MCF 10A (cell line): ENCODE measurements at regions of chrX and their contacts with region 1.

Region 1: DNA sequence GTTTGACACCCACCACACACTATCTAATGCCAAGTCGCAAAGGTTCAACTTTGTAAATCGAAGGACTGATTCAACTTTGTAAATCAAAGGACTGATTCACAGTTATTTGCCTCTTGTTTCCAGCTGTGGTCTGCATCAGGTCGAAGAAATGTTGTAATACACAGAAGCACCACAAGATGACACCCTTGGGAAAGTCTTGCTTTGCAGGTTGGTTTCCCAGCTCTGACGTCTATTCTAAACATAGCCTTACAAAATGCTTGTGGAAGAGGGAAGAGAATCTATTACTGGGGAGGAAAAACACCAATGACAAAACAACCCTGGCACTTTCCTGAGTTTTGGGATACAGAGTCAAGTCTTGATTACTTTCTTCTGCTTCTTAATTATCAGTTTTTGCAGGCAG is 35.3 kb downstream of the SUPT20HL1 start:
- DNase-seq: peak; percentile 79
- H3K4me3 Mint-ChIP-seq: no peak overlapping the region
- H3K27ac Mint-ChIP-seq: no peak overlapping the region
- H3K4me1 Mint-ChIP-seq: peaks cover 6% of the 10 kb centered on the region
- H3K27me3 Mint-ChIP-seq: peaks cover 60% of the 10 kb centered on the region
- CTCF ChIP-seq: peak; percentile 68

Region 2: DNA sequence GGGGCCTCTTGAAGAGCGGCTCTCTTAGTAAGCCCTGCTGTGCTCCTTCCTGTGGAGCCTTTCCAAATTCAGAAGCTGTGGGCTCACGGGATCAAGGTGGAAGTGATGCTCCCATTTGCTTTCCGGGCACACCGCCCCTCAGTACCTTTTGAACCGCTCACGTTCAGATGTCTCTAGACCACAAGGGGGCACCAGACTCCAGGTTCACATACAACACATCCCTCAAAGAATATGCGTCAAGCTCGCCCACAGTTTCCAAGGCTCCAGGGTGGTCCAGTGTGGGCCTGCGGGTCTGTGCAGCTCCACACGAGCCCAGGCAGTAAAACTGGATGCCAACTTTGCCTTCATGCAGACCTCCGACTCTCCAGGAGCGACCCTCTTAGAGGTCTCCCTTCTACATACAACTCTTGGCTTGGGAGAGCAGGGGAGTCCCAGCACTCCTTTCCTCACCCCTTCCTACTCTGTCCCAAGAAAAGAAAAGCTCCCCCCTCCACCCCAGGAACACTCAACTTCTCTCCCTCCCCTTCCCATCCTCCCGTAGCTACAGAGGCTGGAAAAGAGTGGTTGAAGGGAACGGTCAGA is 24.3 kb before region 1 on chrX:
- CTCF ChIA-PET with region 1: interaction called, 39 read pairs
- POLR2A ChIA-PET with region 1: no interaction called
- intact Hi-C with region 1: no loop called
- DNase-seq: peak; percentile 74
- H3K4me3 Mint-ChIP-seq: no peak overlapping the region
- H3K27ac Mint-ChIP-seq: no peak overlapping the region
- H3K4me1 Mint-ChIP-seq: no peaks in the 10 kb centered on the region
- H3K27me3 Mint-ChIP-seq: peaks cover 29% of the 10 kb centered on the region
- CTCF ChIP-seq: peak; percentile 75

Region 3: GRCh38 chrX:24464836-24465531 is 69.2 kb after region 1 on chrX and contains the start of gene PDK3:
- CTCF ChIA-PET with region 1: interaction called, 6 read pairs
- POLR2A ChIA-PET with region 1: interaction called, 12 read pairs
- intact Hi-C with region 1: no loop called
- DNase-seq: peak; percentile 84
- H3K4me3 Mint-ChIP-seq: peak within 1 kb of the TSS; percentile 73
- H3K27ac Mint-ChIP-seq: no peak within 1 kb of the TSS
- H3K4me1 Mint-ChIP-seq: no peaks in the 10 kb centered on the region
- H3K27me3 Mint-ChIP-seq: peaks cover 34% of the 10 kb centered on the region
- CTCF ChIP-seq: no peak
- total RNA-seq, gene PDK3: 1.0 and 1.4 TPM in 2 replicates

Region 4: DNA sequence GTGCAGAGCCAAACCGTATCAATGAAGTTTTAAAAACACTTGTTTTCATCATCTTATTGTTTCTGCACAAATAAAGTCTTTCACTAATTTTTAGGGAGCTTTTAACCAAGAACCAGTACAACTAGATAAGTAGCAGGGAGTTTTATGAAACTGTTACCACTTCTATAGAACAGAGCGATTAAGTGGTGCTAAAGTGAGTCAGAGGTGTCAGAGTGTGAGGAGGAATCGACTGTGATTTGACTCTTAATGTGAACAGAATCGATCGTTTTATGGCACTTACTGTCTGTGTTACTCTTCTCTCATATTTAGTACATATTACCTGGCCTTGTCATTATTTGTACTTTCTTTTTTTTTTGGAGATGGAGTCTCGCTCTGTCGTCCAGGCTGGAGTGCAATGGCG is 112.6 kb after region 1 on chrX:
- CTCF ChIA-PET with region 1: interaction called, 310 read pairs
- POLR2A ChIA-PET with region 1: no interaction called
- intact Hi-C with region 1: no loop called
- DNase-seq: no peak
- H3K4me3 Mint-ChIP-seq: no peak overlapping the region
- H3K27ac Mint-ChIP-seq: no peak overlapping the region
- H3K4me1 Mint-ChIP-seq: peaks cover 6% of the 10 kb centered on the region
- H3K27me3 Mint-ChIP-seq: peaks cover 82% of the 10 kb centered on the region
- CTCF ChIP-seq: no peak

Region 5: DNA sequence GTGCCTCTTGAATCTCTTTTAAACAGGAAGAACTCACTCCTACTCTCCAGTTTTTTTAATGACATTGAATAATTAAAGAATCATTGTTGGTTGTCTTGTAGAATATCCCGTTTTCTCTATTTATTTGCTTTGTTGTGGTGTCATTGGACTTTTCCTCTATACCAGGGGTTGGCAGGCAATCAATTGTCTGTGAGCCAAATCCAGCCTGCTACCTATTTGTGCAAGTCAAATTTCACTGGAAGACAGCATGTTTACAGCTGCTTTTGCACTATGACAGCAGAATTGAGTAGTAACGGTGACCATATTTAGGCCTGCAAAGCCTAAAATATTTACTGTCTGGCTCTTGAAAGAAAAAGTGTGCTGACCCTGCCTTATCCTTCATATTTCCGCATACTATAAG is 332.8 kb after region 1 on chrX:
- CTCF ChIA-PET with region 1: no interaction called
- POLR2A ChIA-PET with region 1: interaction called, 3 read pairs
- intact Hi-C with region 1: loop called (anchors 10 kb)
- DNase-seq: no peak
- H3K4me3 Mint-ChIP-seq: no peak overlapping the region
- H3K27ac Mint-ChIP-seq: no peak overlapping the region
- H3K4me1 Mint-ChIP-seq: no peaks in the 10 kb centered on the region
- H3K27me3 Mint-ChIP-seq: peaks cover 55% of the 10 kb centered on the region
- CTCF ChIP-seq: no peak